Activated naive CD4-positive, alpha-beta T cell treated with anti-CD3 and anti-CD28 coated beads for 36 hours (primary cell): ENCODE measurements at regions of chr11 and their contacts with region 1.

Region 1: DNA sequence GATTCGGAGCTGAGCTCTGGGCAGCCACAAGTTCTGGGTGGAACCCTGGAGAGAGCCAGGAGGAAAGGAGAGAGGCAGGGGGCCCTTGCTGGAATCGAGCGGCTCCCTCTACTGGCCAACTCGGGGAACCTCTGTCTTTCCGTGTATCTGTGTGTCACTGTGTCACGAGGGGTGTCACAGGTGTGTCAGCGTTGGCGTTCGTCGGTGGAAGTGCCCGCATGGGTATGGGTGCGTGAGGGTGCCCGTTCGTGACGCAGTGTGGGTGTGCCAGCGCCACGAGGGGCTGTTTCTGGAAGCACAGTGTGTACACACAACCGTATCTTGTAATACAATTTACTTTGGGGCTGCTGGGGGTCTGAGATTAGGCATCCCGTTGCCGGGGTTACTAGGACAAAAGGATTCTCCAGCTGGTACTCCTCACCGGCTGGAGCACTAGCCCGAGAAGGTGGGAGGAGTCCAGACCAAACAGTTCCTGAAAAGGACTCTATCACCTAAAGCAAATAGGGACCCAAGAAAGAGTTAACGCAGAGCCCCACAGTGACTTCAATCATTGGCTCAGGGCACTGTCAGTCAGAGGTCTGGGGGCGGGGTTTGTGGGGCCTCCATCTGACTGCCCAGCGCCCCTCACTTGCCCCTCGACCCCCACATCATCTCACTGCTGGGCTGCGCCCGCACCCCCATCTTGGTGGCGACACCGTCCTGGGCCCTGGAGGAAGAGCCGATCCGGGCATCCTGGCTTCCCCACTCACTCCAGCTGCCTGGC is 2.6 kb upstream of the BCL9L start:
- DNase-seq: peak; percentile 96
- H3K4me3 Mint-ChIP-seq: peak overlapping the region; percentile 96
- H3K27ac Mint-ChIP-seq: peak overlapping the region; percentile 95
- H3K4me1 Mint-ChIP-seq: peaks cover 37% of the 10 kb centered on the region
- H3K27me3 Mint-ChIP-seq: no peaks in the 10 kb centered on the region

Region 2: GRCh38 chr11:118240999-118241768 is 687.1 kb before region 1 on chr11:
- CTCF ChIA-PET with region 1: no interaction called
- intact Hi-C with region 1: no loop called
- DNase-seq: peak; percentile 87
- H3K4me3 Mint-ChIP-seq: peak overlapping the region; percentile 77
- H3K27ac Mint-ChIP-seq: peak overlapping the region; percentile 99
- H3K4me1 Mint-ChIP-seq: peaks cover 91% of the 10 kb centered on the region
- H3K27me3 Mint-ChIP-seq: no peaks in the 10 kb centered on the region

Region 3: GRCh38 chr11:118742304-118742703 is 186.0 kb before region 1 on chr11:
- CTCF ChIA-PET with region 1: no interaction called
- intact Hi-C with region 1: no loop called
- DNase-seq: no peak
- H3K4me3 Mint-ChIP-seq: no peak overlapping the region
- H3K27ac Mint-ChIP-seq: no peak overlapping the region
- H3K4me1 Mint-ChIP-seq: no peaks in the 10 kb centered on the region
- H3K27me3 Mint-ChIP-seq: no peaks in the 10 kb centered on the region

Region 4: DNA sequence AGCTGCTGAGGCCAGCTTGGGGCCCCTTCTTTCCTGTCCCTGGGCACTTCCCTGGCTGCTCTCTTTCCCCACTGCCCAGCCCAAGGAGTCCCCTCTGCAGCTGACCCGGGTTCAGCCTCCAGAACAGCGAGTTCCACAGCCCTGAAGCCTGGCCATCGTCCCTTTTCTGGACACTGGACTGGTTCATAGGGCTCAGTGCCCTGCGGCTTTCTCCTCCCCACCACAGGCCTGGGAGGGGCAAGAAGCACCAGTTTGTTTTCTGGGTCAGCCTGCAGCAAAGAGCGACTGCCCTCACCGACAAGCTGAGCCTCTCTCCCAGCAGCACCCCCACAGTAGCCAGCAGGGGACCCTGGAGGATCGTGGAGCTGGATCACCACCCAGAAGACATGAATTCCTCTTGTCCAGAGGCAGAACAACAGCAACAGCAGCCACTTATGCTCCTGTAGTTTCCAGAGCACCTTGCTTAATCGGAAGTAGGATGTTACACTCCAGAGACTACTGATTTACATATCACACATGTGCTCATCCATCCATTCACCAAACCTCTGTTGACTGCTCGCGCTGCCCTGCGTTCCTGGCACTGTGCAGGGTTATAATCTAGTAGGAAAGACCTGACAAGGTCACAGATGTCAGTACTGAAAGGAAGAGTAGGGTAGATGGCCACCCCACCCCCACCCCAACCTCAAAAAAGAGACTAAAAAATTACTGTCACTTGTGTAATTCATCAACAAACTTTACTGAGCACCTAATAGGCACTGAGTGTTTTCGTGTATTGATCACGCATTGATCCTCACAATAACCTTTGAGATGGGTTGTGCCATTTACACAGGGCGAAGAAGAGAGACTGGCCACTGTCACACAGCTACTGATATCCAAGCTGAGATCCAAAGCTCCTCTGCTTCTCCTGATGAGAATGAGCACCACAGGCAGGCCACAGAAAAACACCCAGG is 57.6 kb before region 1 on chr11:
- CTCF ChIA-PET with region 1: interaction called, 6 read pairs
- intact Hi-C with region 1: loop called (anchors 1 kb)
- DNase-seq: peak; percentile 80
- H3K4me3 Mint-ChIP-seq: peak overlapping the region; percentile 85
- H3K27ac Mint-ChIP-seq: peak overlapping the region; percentile 100
- H3K4me1 Mint-ChIP-seq: peaks cover 67% of the 10 kb centered on the region
- H3K27me3 Mint-ChIP-seq: no peaks in the 10 kb centered on the region

Region 5: DNA sequence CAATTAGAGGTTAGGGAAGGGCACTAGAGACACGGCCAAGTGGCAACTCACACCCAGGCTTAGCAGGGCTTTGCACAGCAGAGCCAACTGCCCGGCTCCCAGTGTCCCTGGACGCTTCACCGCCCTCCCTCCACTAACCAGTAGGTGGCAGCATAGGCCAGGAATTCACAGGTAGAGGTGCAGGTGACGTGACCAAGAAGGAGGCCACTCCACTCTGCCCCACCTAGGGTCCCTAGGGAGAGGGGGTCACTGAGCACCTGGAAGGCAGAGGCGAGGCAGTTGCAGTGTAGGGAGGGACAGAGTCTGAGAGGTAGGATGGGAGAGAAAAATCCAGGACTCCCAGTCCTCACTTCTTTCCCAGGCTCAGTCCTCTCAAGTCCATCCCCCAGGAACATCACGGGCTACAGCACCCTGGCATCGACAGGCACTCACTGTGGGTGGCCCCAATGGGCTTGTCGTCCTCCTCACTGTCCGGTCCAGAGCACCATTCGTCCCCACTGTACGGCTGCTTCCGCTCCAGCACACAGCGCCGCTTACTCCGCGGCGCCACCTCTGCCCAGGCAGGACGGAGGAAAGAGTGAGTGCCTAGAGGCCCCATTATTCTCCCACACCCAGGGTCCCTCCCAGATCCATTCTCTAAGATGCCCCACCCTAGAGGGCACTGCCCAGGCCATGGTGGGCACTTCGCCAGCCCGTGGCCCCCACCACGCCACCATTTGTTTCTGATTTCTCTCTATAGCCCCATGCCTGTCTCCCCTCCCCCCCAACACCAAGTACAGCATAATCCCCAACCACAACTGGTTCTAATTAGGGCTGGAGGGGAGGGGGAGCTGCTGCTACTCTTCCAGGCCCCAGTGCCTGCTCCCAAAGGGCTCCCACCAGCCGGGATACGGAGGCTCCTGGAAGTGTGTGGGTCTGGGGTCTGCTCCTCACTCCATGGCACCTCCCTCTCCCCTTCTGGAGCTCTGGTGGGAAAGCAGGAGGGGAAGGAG is 20.9 kb before region 1 on chr11:
- CTCF ChIA-PET with region 1: interaction called, 3 read pairs
- intact Hi-C with region 1: loop called (anchors 1 kb)
- DNase-seq: peak; percentile 96
- H3K4me3 Mint-ChIP-seq: no peak overlapping the region
- H3K27ac Mint-ChIP-seq: peak overlapping the region; percentile 80
- H3K4me1 Mint-ChIP-seq: peaks cover 45% of the 10 kb centered on the region
- H3K27me3 Mint-ChIP-seq: no peaks in the 10 kb centered on the region

Region 6: DNA sequence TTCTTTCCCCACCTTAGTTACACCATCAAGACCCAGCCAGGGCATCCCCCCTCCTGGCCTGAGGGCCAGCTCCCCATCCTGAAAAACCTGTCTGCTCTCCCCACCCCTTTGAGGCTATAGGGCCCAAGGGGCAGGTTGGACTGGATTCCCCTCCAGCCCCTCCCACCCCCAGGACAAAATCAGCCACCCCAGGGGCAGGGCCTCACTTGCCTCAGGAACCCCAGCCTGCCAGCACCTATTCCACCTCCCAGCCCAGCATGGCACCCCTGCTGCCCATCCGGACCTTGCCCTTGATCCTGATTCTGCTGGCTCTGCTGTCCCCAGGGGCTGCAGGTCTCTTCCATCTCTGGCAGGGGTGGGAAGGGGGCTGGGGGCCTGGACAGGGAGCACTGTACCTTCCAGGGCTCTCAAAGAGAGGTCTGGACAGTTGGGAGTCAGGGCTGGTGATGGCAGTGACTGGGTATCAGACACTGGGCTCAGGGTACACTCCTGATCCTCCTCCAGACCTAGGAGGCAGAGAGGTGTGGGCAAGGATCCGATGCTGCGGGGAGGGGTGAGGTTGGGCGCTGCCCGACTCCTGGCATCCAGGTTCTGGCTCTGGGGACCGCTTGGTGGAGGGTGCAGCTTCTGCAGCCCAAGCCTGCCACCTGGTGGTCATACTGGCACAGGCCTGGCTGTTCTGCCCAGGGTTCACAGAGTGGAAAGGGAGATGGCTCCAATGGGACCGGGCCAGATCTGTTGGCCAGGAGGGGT is 28.0 kb after region 1 on chr11 and contains the start of gene UPK2:
- CTCF ChIA-PET with region 1: interaction called, 16 read pairs
- intact Hi-C with region 1: loop called (anchors 1 kb)
- DNase-seq: peak; percentile 95
- H3K4me3 Mint-ChIP-seq: no peak within 1 kb of the TSS
- H3K27ac Mint-ChIP-seq: no peak within 1 kb of the TSS
- H3K4me1 Mint-ChIP-seq: peaks cover 5% of the 10 kb centered on the region
- H3K27me3 Mint-ChIP-seq: no peaks in the 10 kb centered on the region
- total RNA-seq, gene UPK2: 0.25 to 0.45 TPM

Region 7: DNA sequence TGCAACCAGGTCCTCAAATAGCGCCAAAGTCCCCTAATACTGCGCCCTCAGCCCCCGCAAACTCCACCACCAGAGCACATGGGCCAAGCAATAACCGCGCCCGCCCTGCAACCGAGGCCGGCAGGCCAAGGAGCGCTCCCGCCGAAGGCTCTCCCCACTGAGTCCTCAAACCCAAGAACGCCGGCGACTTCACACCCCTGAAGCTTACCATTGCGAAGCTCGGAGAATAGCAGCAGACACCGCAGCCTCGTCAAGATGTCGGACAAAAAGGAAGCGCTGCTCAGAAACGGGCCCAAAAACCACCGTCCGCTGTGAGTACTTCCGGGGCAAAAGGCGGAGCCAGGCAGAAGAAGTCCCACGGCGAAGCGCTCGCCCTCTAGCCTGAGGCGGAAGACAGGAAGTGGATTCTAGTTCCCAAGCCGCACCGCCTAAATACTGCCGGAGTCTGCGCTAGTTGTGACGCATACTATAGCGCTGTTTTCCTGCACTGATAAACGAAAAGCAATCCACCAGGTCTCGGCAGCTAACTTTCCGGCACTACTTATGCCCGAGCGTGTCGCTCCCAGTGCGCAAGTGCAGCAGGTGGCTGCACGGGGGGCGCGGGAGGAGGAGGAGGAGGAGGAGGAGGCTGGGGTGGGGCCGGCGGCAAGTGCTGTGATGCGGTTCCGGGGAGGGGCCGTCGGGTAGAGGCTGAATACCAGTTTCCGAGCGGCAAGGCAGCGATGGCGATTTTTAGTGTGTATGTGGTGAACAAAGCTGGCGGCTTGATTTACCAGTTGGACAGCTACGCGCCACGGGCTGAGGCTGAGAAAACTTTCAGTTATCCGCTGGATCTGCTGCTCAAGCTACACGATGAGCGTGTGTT is 90.0 kb after region 1 on chr11 and contains the starts of genes RPS25 and TRAPPC4:
- CTCF ChIA-PET with region 1: no interaction called
- intact Hi-C with region 1: loop called (anchors 2 kb)
- DNase-seq: peak; percentile 98
- H3K4me3 Mint-ChIP-seq: peak within 1 kb of the TSS; percentile 98
- H3K27ac Mint-ChIP-seq: peak within 1 kb of the TSS; percentile 99
- H3K4me1 Mint-ChIP-seq: peaks cover 59% of the 10 kb centered on the region
- H3K27me3 Mint-ChIP-seq: no peaks in the 10 kb centered on the region
- total RNA-seq, gene RPS25: 2,183 to 2,206 TPM
- total RNA-seq, gene TRAPPC4: 66.4 to 69.9 TPM

Region 8: GRCh38 chr11:119205574-119206510 is 277.6 kb after region 1 on chr11 and contains the start of gene CBL:
- CTCF ChIA-PET with region 1: no interaction called
- intact Hi-C with region 1: no loop called
- DNase-seq: peak; percentile 99
- H3K4me3 Mint-ChIP-seq: peak within 1 kb of the TSS; percentile 93
- H3K27ac Mint-ChIP-seq: peak within 1 kb of the TSS; percentile 88
- H3K4me1 Mint-ChIP-seq: peaks cover 29% of the 10 kb centered on the region
- H3K27me3 Mint-ChIP-seq: no peaks in the 10 kb centered on the region
- total RNA-seq, gene CBL: 25.3 to 25.7 TPM

Region 9: DNA sequence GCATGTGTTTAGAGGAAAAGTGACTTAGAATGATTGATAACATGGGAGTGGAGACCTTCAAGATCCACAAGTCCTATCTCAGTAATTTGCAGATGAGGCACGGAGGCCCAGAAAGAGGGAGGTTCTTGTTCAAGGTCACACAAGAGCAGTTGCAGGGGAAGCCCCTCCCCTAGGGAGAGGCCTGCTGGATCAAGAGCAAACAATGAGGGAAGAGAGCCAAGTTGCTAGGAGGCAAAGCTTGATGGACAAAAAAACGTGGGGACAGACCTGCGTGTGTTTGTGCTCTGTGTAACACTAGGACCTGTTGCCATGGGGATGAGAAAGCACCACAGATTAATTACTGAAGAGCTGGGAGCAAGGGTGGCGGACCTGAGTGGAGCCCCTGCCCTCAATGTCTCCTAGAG is 424.6 kb after region 1 on chr11:
- CTCF ChIA-PET with region 1: no interaction called
- intact Hi-C with region 1: no loop called
- DNase-seq: no peak
- H3K4me3 Mint-ChIP-seq: no peak overlapping the region
- H3K27ac Mint-ChIP-seq: no peak overlapping the region
- H3K4me1 Mint-ChIP-seq: peaks cover 5% of the 10 kb centered on the region
- H3K27me3 Mint-ChIP-seq: peaks cover 31% of the 10 kb centered on the region